ENCODE measurements at regions of chr4 and their contacts with region 1.

Region 1: GRCh38 chr4:148998719-148999118 is 556.5 kb upstream of the NR3C2 start:
- DNase-seq: no peak
- ATAC-seq: peak; percentile 67
- H3K4me3 ChIP-seq: no peak overlapping the region
- H3K27ac ChIP-seq: no peak overlapping the region
- H3K4me1 ChIP-seq: no peaks in the 10 kb centered on the region
- H3K27me3 ChIP-seq: no peaks in the 10 kb centered on the region
- CTCF ChIP-seq: peak; percentile 27 to 36 (median 30); a peak in 2 of 6 replicates
- EP300 ChIP-seq: no peak
- POLR2A ChIP-seq: no peak
- RAD21 ChIP-seq: peak; percentile 31; the same call in 1 of the 2 replicates

Region 2: DNA sequence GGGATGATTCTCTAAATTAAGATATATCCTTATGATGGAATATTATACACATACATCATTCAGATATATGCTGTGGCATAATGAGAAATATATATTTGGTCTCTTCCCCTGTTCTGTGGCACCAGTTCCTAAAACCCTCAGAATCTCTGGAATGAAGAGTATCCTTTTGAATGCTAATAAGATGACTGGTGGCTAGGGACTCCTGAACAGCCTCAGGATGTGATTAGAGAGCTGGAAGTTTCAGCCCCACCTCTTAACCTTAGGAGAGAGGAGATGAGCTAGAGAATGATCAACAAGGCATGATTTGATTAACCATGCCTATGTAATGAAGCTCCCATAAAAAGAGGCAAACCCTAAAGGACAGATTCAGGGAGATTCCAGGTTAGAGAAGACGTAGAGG is 184.9 kb after region 1 on chr4:
- CTCF ChIA-PET with region 1: no interaction called
- POLR2A ChIA-PET with region 1: no interaction called
- RAD21 ChIA-PET with region 1: no interaction called
- SMC1A ChIA-PET with region 1: no interaction called
- in situ Hi-C with region 1: no loop called
- intact Hi-C with region 1: loop called (anchors 10 kb)
- DNase-seq: no peak
- ATAC-seq: no peak
- H3K4me3 ChIP-seq: no peak overlapping the region
- H3K27ac ChIP-seq: no peak overlapping the region
- H3K4me1 ChIP-seq: no peaks in the 10 kb centered on the region
- H3K27me3 ChIP-seq: no peaks in the 10 kb centered on the region
- CTCF ChIP-seq: no peak
- EP300 ChIP-seq: no peak
- POLR2A ChIP-seq: no peak
- RAD21 ChIP-seq: no peak

Region 3: DNA sequence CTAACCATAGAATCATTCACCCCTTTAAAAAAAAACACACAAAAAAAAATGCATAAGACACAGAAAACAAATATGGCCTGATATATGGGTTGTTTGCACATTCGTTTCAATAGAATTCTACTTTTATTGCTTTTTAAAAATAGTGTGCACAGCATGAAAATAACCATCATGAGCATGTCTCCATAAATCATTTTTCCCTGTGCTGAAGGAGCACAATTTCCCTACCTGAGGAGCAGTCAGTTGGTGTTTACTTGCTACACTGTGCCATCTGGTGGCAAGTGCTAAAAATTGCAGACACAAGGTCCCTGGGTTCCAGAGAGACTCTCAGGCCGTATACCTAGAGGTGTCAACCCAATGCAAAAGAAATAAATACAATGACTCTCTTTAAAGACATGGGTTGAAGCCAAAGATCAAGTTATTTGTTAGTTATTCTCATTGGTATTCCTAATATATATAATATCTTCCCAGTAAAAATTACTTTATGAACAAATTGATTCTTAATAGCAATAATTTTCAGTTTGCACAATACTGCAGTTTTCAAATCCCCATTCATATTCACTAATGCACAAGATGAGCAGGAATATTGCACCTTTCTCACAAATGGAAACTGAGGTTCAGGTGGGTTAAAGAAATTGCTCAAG is 265.5 kb after region 1 on chr4:
- CTCF ChIA-PET with region 1: interaction called, 5 read pairs
- POLR2A ChIA-PET with region 1: no interaction called
- RAD21 ChIA-PET with region 1: interaction called, 3 read pairs
- SMC1A ChIA-PET with region 1: interaction called, 3 read pairs
- in situ Hi-C with region 1: no loop called
- intact Hi-C with region 1: loop called (anchors 1 kb)
- DNase-seq: peak; percentile 4
- ATAC-seq: peak; percentile 90
- H3K4me3 ChIP-seq: no peak overlapping the region
- H3K27ac ChIP-seq: no peak overlapping the region
- H3K4me1 ChIP-seq: no peaks in the 10 kb centered on the region
- H3K27me3 ChIP-seq: no peaks in the 10 kb centered on the region
- CTCF ChIP-seq: peak; percentile 61 to 75 (median 67)
- EP300 ChIP-seq: no peak
- POLR2A ChIP-seq: no peak
- RAD21 ChIP-seq: peak; percentile 73

Measured in GM12878 (cell line).